Activated naive CD4-positive, alpha-beta T cell treated with anti-CD3 and anti-CD28 coated beads, Interleukin-2, amount 10 ng/mL, durations not matched to agents 7 days and 5 days (primary cell): ENCODE measurements at regions of chr20 and their contacts with region 1.

Region 1: GRCh38 chr20:38446441-38447209 is 11.5 kb upstream of the SNHG17 start:
- DNase-seq: peak; percentile 93
- H3K4me3 Mint-ChIP-seq: peak overlapping the region; percentile 79
- H3K27ac Mint-ChIP-seq: peak overlapping the region; percentile 81
- H3K4me1 Mint-ChIP-seq: peaks cover 26% of the 10 kb centered on the region
- H3K27me3 Mint-ChIP-seq: peaks cover 16% of the 10 kb centered on the region

Region 2: GRCh38 chr20:38434743-38435554 is 11.7 kb before region 1 on chr20 and contains the start of gene SNHG17:
- CTCF ChIA-PET with region 1: interaction called, 69 read pairs
- DNase-seq: peak; percentile 92
- H3K4me3 Mint-ChIP-seq: peak within 1 kb of the TSS; percentile 98
- H3K27ac Mint-ChIP-seq: peak within 1 kb of the TSS; percentile 96
- H3K4me1 Mint-ChIP-seq: peaks cover 42% of the 10 kb centered on the region
- H3K27me3 Mint-ChIP-seq: peaks cover 15% of the 10 kb centered on the region

Region 3: DNA sequence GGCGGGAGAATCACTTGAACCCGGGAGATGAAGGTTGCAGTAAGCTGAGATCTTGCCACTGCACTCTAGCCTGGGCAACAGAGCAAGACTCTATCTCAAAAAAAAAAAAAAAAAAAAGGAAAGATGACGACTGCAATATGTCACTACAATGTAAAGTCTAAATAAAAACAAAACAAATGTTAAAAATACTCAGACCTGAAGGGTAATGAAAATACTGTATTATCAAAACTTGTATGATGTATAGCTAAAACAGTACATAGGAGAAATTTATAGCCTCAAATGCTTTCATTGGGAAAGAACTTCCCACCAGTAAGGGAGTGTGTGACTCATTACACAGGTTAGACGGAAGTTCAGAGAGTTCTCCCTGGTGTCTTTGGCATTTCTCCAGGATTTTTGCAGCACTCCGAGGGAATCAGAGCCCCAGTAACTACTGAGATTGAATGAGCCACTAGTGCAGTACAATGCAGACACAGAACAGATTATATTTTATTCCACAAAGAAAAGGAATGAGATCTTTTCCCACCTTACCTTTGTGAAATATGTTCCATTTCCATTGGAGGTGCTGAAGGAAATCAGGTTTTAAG is 13.5 kb after region 1 on chr20:
- CTCF ChIA-PET with region 1: no interaction called
- DNase-seq: no peak
- H3K4me3 Mint-ChIP-seq: no peak overlapping the region
- H3K27ac Mint-ChIP-seq: no peak overlapping the region
- H3K4me1 Mint-ChIP-seq: no peaks in the 10 kb centered on the region
- H3K27me3 Mint-ChIP-seq: peaks cover 15% of the 10 kb centered on the region

Region 4: DNA sequence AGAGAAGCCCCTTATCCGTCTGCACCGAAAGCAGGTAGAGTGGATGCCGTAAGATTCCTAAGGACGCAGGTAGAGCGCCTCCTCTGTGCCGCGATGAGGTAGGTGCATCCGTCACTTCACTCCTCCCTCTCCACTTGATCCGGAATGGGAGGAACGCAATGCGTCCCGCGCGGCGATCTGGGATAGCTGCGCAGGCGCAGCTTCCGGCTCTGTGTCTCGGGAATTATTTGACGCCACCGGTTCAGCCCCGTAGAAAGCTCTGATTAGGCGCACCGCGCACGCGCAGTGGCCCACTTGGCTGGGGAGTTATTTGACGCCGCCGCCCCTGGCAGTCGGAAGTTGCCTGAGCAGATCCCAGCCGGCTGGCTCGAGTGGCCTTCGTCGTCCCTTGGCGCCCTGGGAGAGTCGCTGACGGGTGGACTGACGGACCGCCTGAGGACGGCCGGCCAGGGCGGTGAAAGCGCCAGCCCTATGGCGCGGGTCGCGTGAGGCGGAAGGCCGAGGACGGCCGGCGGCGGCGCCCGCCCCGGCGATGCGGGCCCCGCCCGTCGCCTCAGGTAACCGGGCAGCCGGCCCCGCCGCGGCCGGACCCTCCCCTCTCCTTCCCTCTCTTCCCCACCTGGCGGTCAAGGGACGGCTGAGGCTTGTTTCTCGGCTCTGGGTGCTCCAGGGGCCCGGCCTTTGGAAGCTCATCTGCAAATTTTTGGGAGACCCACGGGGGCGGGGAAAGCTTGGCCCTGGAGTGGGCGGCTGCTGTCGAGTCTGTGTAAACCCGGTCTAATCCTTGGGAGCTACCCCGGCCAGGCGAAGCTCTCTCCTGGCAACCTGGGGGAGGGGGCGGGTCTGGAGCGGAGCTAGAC is 26.1 kb after region 1 on chr20 and contains the start of gene RALGAPB:
- CTCF ChIA-PET with region 1: interaction called, 20 read pairs
- DNase-seq: peak; percentile 99
- H3K4me3 Mint-ChIP-seq: peak within 1 kb of the TSS; percentile 79
- H3K27ac Mint-ChIP-seq: peak within 1 kb of the TSS; percentile 83
- H3K4me1 Mint-ChIP-seq: peaks cover 35% of the 10 kb centered on the region
- H3K27me3 Mint-ChIP-seq: peaks cover 17% of the 10 kb centered on the region

Region 5: DNA sequence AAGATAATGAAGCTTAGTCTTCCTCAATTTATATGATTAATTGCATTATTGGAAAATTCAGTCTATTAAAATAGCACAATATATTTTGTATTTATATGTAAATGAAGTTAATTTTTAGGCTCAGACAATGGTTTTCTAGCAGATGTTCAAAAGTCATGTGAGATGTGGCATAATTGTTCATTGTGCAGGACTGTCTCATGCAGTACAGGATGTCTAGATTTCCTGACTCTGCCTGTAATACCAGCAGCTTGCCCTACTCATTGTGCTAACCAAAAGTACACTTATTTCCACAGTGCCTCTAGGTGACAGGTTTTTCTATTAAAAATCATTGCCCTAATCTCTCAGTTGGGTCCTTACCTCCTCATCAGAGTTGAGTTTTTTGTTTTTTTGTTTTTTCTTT is 38.4 kb after region 1 on chr20:
- CTCF ChIA-PET with region 1: no interaction called
- DNase-seq: no peak
- H3K4me3 Mint-ChIP-seq: no peak overlapping the region
- H3K27ac Mint-ChIP-seq: no peak overlapping the region
- H3K4me1 Mint-ChIP-seq: no peaks in the 10 kb centered on the region
- H3K27me3 Mint-ChIP-seq: no peaks in the 10 kb centered on the region